Lower lobe of right lung (tissue), 2 donors: ENCODE measurements at regions of chr3 and their contacts with region 1.

Region 1: GRCh38 chr3:32467333-32468070 is 35.1 kb downstream of the CMTM6 start:
- DNase-seq: peak; percentile 82
- ATAC-seq: peak; percentile 95 to 97
- H3K4me3 ChIP-seq: peak overlapping the region; percentile 49
- H3K27ac ChIP-seq: peak overlapping the region; percentile 47
- H3K4me1 ChIP-seq: peaks cover 31% of the 10 kb centered on the region
- H3K27me3 ChIP-seq: no peaks in the 10 kb centered on the region
- CTCF ChIP-seq: peak; percentile 100

Region 2: GRCh38 chr3:32391643-32392535 is 75.6 kb before region 1 on chr3 and contains the start of gene CMTM7:
- intact Hi-C with region 1: loop called (anchors 10 kb)
- DNase-seq: peak; percentile 87
- ATAC-seq: peak; percentile 94 to 95
- H3K4me3 ChIP-seq: peak within 1 kb of the TSS; percentile 91
- H3K27ac ChIP-seq: peak within 1 kb of the TSS; percentile 94
- H3K4me1 ChIP-seq: peaks cover 19% of the 10 kb centered on the region
- H3K27me3 ChIP-seq: no peaks in the 10 kb centered on the region
- CTCF ChIP-seq: no peak
- total RNA-seq, gene CMTM7: 49.9 TPM

Region 3: DNA sequence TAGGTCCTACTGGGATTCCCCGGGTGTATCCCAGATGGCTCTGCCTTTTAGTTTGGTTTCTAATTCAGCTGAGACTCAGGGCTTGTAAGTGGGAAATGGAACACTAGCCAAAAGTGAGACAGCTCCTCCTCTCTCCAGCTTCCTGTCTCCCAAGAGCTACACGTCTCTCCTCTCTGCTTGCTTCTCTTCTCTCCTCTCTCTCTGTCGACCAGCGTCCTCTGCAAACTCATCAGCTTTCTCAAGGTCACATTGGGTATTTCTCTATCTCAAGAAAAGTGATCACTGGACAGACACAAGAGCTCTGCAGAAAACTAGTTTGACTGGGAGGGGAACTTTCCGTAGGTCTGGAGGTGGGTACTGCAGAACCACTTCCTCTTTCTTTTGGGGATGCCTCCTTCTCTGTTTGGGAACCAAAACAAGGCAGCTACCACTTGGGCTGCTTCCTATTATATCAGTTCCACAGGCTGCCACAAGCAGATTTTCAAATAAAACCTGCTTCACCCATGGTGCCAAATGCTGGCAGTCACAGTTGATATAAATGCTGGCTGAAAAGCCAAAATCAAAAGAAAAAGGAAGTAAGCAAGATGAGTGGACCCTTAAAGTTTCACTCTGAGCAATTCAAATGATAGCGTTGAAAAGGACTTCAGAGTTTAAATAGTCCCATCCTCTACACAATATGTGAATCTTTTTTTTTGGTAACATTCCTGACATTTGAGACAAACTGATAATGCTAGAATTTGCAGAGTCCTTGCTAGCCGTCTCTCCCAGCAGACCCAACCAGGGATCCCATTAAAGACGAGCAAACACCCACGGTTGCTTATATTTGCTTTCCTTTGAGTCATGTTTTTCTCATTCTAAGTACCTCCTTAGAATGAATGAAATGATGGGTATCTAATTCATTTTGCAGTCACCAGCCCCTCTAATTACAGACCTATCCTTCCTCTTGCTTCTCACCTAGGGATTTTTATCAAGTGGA is 110.4 kb after region 1 on chr3:
- intact Hi-C with region 1: no loop called
- DNase-seq: no peak
- ATAC-seq: peak; percentile 76 to 77
- H3K4me3 ChIP-seq: peak overlapping the region; percentile 28
- H3K27ac ChIP-seq: peak overlapping the region; percentile 19
- H3K4me1 ChIP-seq: peaks cover 16% of the 10 kb centered on the region
- H3K27me3 ChIP-seq: no peaks in the 10 kb centered on the region
- CTCF ChIP-seq: no peak